Vagina (tissue), 2 donors: ENCODE measurements at regions of chrX and their contacts with region 1.

Region 1: GRCh38 chrX:65601530-65602220 is 65.8 kb upstream of the MSN start:
- DNase-seq: no peak
- H3K4me3 ChIP-seq: no peak overlapping the region
- H3K27ac ChIP-seq: peak overlapping the region; percentile 90
- H3K4me1 ChIP-seq: peaks cover 24% of the 10 kb centered on the region
- H3K27me3 ChIP-seq: no peaks in the 10 kb centered on the region
- CTCF ChIP-seq: peak in 1 of 3 experiments; percentile 46
- POLR2A ChIP-seq: no peak

Region 2: GRCh38 chrX:64379924-64380323 is 1221.8 kb before region 1 on chrX:
- intact Hi-C with region 1: no loop called
- DNase-seq: no peak
- H3K4me3 ChIP-seq: no peak overlapping the region
- H3K27ac ChIP-seq: no peak overlapping the region
- H3K4me1 ChIP-seq: no peaks in the 10 kb centered on the region
- H3K27me3 ChIP-seq: no peaks in the 10 kb centered on the region
- CTCF ChIP-seq: no peak
- POLR2A ChIP-seq: no peak

Region 3: GRCh38 chrX:65534450-65535292 is 67.0 kb before region 1 on chrX and contains the start of gene LAS1L:
- intact Hi-C with region 1: no loop called
- DNase-seq: peak; percentile 94 to 98
- H3K4me3 ChIP-seq: peak within 1 kb of the TSS; percentile 52 to 57
- H3K27ac ChIP-seq: peak within 1 kb of the TSS; percentile 34
- H3K4me1 ChIP-seq: peaks cover 7% of the 10 kb centered on the region
- H3K27me3 ChIP-seq: no peaks in the 10 kb centered on the region
- CTCF ChIP-seq: no peak
- POLR2A ChIP-seq: no peak
- total RNA-seq, gene LAS1L: 17.9 TPM

Region 4: GRCh38 chrX:65667503-65668376 is 66.1 kb after region 1 on chrX and contains the start of gene MSN:
- intact Hi-C with region 1: loop called (anchors 1 kb)
- DNase-seq: no peak
- H3K4me3 ChIP-seq: peak within 1 kb of the TSS; percentile 74 to 76
- H3K27ac ChIP-seq: peak within 1 kb of the TSS; percentile 98
- H3K4me1 ChIP-seq: peaks cover 26% of the 10 kb centered on the region
- H3K27me3 ChIP-seq: no peaks in the 10 kb centered on the region
- CTCF ChIP-seq: no peak
- POLR2A ChIP-seq: peak in 1 of 2 donors; percentile 52
- total RNA-seq, gene MSN: 192 TPM